K562 (cell line): ENCODE measurements at regions of chr22 and their contacts with region 1.

Region 1: GRCh38 chr22:20965104-20965887 is 1.8 kb upstream of the AIFM3 start:
- DNase-seq: peak in 3 of 4 experiments; percentile 65 to 97 (median 97)
- ATAC-seq: no peak
- H3K4me3 ChIP-seq: no peak overlapping the region
- H3K27ac ChIP-seq: no peak overlapping the region
- H3K4me1 ChIP-seq: peaks cover 0 to 40% of the 10 kb centered on the region in 2 experiments; a peak in 3 of 5 replicates
- H3K27me3 ChIP-seq: peaks cover 11 to 38% of the 10 kb centered on the region in 2 experiments; a peak in 4 of 5 replicates
- CTCF ChIP-seq: no peak
- EP300 ChIP-seq: no peak
- POLR2A ChIP-seq: no peak
- RAD21 ChIP-seq: no peak

Region 2: DNA sequence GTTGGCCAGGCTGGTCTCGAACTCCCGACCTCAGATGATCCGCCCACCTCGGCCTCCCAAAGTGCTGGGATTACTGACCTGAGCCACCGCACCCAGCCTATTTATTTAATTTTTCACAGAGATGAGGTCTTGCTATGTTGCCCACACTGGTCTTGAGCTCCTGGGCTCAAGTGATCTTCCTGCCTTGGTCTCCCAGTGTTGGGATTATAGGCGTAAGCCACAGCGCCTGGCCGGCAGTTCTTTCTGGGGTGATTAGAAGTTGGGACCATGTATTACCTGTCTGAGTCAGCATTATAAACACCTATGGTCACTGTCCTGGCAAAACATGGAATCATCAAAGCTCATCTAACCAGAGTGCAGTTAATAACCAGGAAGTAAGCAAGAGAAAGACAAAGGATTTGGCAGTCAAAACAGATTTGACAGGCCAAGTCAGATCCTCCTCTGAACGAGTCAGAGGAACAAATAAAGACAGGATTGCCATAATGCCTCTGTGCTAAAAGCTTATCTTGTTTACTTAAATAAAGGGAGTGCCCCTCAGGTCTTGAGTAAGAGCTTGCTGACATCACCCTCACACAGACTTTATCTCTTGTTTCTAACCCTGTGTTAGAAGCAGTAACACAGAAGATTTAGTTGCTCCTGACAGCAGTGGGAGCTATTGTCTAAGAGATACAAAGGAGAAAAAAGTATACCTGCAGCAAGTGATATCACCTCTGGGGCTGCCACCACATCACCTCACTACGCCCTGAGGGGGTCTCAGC is 187.7 kb before region 1 on chr22:
- CTCF ChIA-PET with region 1: interaction called, 3 read pairs
- POLR2A ChIA-PET with region 1: no interaction called
- in situ Hi-C with region 1: no loop called
- intact Hi-C with region 1: loop called (anchors 5 kb)
- DNase-seq: peak; percentile 97 to 99 (median 98)
- ATAC-seq: peak; percentile 97
- H3K4me3 ChIP-seq: no peak overlapping the region
- H3K27ac ChIP-seq: peak overlapping the region; percentile 69; the same call in 2 of the 3 replicates
- H3K4me1 ChIP-seq: peaks cover 21 to 32% of the 10 kb centered on the region in 2 experiments
- H3K27me3 ChIP-seq: no peaks in the 10 kb centered on the region
- CTCF ChIP-seq: peak in 2 of 3 experiments; percentile 90 to 99; a peak in 4 of 6 replicates
- EP300 ChIP-seq: peak; percentile 100
- POLR2A ChIP-seq: no peak
- RAD21 ChIP-seq: peak in 1 of 2 experiments; percentile 97; a peak in 2 of 4 replicates

Region 3: GRCh38 chr22:20943104-20943933 is 22.0 kb before region 1 on chr22:
- CTCF ChIA-PET with region 1: no interaction called
- POLR2A ChIA-PET with region 1: interaction called, 1,556 read pairs
- in situ Hi-C with region 1: no loop called
- intact Hi-C with region 1: loop called (anchors 2 kb)
- DNase-seq: no peak
- ATAC-seq: no peak
- H3K4me3 ChIP-seq: no peak overlapping the region
- H3K27ac ChIP-seq: no peak overlapping the region
- H3K4me1 ChIP-seq: peaks cover 9 to 23% of the 10 kb centered on the region in 2 experiments; a peak in 3 of 5 replicates
- H3K27me3 ChIP-seq: no peaks in the 10 kb centered on the region
- CTCF ChIP-seq: no peak
- EP300 ChIP-seq: no peak
- POLR2A ChIP-seq: no peak
- RAD21 ChIP-seq: no peak

Region 4: DNA sequence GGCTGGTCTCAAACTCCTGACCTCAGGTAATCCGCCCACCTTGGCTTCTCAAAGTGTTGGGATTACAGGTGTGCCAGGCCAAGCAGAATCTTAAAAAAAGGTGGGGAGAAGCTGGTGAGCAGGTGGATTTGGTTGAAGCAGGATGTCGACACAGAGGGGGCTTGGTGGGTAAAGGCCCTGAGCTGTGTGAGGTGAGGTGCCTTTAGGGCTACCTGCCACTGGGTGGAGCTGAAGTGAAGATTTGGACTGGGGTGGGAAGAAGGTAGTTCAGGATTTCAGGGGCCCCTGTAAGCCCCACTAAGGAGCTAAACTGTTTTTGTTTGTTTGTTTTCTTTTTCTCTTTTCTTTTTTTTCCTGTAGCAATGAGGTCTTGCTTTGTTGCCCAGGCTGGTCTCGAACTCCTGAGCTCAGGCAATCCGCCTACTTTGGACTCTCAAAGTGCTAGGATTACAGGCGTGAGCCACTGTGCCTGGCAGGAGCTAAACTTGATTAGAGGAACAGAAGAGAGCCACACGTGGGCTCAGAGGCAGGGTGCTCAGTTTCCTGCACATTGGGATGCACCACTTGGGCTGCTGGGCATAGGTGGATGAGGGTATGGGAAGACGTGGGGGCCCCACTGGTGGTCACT is 55.6 kb after region 1 on chr22:
- CTCF ChIA-PET with region 1: no interaction called
- POLR2A ChIA-PET with region 1: interaction called, 4 read pairs
- in situ Hi-C with region 1: no loop called
- intact Hi-C with region 1: loop called (anchors 5 kb)
- DNase-seq: peak; percentile 85 to 98 (median 96)
- ATAC-seq: peak; percentile 88
- H3K4me3 ChIP-seq: no peak overlapping the region
- H3K27ac ChIP-seq: no peak overlapping the region
- H3K4me1 ChIP-seq: peaks cover 7 to 31% of the 10 kb centered on the region in 2 experiments
- H3K27me3 ChIP-seq: peaks cover 3 to 16% of the 10 kb centered on the region in 2 experiments; a peak in 4 of 5 replicates
- CTCF ChIP-seq: peak; percentile 94 to 97 (median 97)
- EP300 ChIP-seq: no peak
- POLR2A ChIP-seq: no peak
- RAD21 ChIP-seq: peak in 1 of 2 experiments; percentile 93; a peak in 3 of 4 replicates

Region 5: DNA sequence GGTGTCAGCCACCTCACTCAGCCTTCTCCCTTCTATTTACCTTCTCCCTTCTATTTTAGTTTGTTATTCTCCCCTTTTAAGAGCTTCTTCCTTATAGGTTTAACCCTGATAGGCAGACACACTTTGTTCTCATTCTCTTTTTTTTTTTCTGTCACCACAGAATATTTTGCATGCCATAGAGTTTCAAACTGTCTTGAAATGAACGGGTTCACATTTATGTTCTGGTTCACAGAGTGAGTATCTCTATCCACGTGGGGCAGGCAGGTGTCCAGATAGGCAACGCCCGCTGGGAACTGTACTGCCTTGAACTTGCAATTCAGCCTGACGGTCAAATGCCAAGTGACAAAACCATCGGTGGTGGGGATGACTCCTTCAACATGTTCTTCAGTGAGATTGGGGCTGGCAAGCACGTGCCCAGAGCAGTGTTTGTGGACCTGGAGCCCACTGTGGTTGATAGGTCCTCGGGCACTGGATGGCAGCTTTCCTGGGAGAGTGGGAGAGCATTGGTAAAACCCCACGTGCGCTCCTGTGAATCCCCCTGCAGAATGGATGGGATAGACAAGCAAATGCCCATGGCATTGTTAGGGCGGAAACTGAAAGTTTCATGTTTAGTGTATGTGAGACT is 100.0 kb after region 1 on chr22:
- CTCF ChIA-PET with region 1: no interaction called
- POLR2A ChIA-PET with region 1: no interaction called
- in situ Hi-C with region 1: no loop called
- intact Hi-C with region 1: loop called (anchors 5 kb)
- DNase-seq: peak in 1 of 4 experiments; percentile 20
- ATAC-seq: no peak
- H3K4me3 ChIP-seq: no peak overlapping the region
- H3K27ac ChIP-seq: no peak overlapping the region
- H3K4me1 ChIP-seq: no peaks in the 10 kb centered on the region
- H3K27me3 ChIP-seq: peaks cover 60 to 71% of the 10 kb centered on the region in 2 experiments
- CTCF ChIP-seq: no peak
- EP300 ChIP-seq: no peak
- POLR2A ChIP-seq: no peak
- RAD21 ChIP-seq: no peak